SK-N-SH (cell line): ENCODE measurements at regions of chr20 and their contacts with region 1.

Region 1: GRCh38 chr20:53915446-53916172 is 154.8 kb downstream of the BCAS1 start:
- DNase-seq: peak; percentile 86
- H3K4me3 ChIP-seq: peak overlapping the region; percentile 58 to 75
- H3K27ac ChIP-seq: peak overlapping the region; percentile 96 to 99
- H3K4me1 ChIP-seq: peaks cover 37 to 41% of the 10 kb centered on the region in 2 experiments
- H3K27me3 ChIP-seq: no peaks in the 10 kb centered on the region
- CTCF ChIP-seq: peak; percentile 94
- EP300 ChIP-seq: peak; percentile 7 to 36; a peak in 1 of 4 replicates
- RAD21 ChIP-seq: peak; percentile 85

Region 2: DNA sequence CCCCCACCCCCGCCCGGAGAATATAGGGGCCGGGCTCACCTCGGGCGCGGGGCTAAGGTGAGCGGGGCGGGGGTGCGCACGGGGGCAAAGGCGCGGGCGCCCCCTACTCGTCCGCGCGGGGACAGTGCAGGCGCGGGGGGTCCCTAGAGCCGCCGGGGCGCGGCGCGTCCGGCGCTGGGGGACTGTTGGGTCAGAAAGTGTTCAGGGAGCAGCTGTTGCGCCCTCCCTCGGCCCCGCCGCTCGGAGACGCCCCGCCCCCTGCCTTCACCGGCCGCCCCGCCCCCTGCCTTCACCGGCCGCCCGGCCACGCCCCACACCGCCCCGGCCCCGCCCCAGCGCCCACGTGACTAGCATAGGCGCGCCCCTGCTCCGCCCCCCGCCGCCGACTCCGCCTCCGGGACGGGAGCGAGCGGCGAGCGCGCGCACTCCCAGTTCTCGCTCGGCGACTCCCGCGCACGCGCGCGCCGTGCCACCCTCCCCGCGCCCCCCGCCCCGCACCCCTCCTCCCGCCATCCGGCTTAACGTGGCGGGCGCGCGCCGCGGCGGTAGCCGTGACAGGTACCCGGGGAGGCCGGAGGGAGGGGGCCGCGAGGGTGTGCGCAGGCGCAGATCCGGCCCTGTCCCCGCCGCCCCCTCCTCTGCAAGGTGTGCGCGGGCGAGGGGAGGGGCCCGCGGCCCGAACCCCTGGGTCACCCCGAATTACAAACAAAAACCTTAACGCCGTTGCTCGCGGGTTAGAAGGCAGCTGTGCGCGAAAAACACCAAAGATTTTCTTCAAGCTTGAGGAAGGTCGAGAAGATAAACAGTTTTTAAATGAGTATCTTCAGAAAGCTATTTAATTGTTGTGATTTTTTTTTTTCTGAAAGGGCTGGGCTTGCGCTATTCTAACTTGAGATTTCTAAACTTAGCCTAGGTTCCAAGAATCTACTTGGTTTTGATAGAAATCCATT is 321.3 kb before region 1 on chr20:
- CTCF ChIA-PET with region 1: interaction called, 14 read pairs
- POLR2A ChIA-PET with region 1: interaction called, 7 read pairs
- DNase-seq: peak; percentile 92
- H3K4me3 ChIP-seq: peak overlapping the region; percentile 76 to 80
- H3K27ac ChIP-seq: peak overlapping the region; percentile 80 to 86
- H3K4me1 ChIP-seq: peaks cover 4 to 9% of the 10 kb centered on the region in 2 experiments; a peak in 3 of 4 replicates
- H3K27me3 ChIP-seq: no peaks in the 10 kb centered on the region
- CTCF ChIP-seq: peak; percentile 31; the same call in 1 of the 2 replicates
- EP300 ChIP-seq: no peak
- RAD21 ChIP-seq: no peak; the same call in 1 of the 2 replicates

Region 3: DNA sequence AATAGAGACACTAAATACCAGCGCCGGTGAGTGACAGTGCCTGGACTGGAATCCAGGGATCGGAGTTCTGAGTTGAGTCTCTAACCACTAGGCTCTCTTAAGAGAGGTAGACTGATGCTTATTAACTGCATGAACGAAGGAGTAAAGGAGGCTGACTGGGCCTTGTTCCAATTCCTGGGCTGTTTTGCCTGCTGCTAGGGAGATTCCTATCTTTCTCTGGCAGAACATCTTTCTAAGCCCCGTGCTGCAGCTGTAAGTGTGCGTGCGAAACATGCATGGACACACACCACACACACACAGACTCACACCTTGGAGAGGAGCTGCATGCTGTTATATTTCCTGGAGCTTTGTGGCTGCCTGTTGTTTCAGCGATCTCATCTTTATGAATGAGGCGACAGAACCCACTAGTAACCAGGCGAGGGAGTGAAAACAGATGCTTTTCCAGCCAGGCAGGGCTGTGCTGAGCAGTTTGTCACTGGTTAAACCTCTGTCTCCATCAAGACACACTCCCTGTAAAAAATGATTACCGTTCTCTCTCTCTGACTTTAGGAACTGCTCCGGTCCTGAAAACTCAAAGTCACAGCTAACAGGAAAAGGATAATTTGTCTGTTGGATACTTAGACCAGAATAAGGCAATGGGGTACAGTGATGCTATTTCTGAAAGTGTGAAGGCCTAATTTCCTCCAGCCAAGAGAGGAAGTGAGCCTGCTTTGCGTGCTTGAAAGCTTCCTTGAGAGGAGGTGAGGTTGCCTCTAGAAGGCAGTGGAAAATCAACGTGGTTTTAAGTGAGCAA is 164.6 kb before region 1 on chr20:
- CTCF ChIA-PET with region 1: interaction called, 20 read pairs
- POLR2A ChIA-PET with region 1: interaction called, 12 read pairs
- DNase-seq: peak; percentile 70
- H3K4me3 ChIP-seq: no peak overlapping the region
- H3K27ac ChIP-seq: peak overlapping the region; percentile 83 to 95
- H3K4me1 ChIP-seq: peaks cover 12 to 23% of the 10 kb centered on the region in 2 experiments; a peak in 3 of 4 replicates
- H3K27me3 ChIP-seq: no peaks in the 10 kb centered on the region
- CTCF ChIP-seq: peak; percentile 15; the same call in 1 of the 2 replicates
- EP300 ChIP-seq: peak in 1 of 2 experiments; percentile 82; a peak in 2 of 4 replicates
- RAD21 ChIP-seq: peak; percentile 22

Region 4: DNA sequence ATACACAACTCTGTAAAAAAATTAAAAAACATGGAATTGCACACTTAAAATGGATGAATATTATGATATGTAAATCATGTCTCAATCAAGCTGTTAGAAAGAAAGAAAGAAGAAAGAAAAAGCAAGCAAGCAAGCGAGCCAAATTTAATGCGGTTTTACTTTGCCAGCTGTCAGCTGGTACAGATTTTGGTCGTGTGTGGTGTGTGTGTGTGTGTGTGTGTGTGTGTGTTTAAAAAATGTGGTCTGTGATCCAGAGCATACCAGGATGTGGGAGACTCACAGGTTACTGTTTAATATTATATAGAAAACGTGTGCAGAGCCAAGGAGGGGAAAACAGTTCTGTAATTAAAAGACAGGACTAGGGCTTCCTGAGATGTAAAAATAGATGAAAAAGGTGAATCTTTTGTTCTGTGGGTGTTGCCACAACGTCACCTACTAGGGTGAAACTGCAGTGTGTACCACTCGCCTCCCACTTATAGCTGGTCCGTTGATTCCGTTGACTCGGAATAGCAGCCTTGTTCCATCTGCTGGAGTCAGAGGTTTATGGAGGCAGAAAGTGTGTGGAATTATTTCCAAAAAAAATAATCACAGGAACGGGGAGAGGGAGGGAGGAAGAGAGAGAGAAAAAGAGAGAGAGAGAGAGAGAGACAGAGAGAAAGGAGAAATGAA is 42.9 kb before region 1 on chr20:
- CTCF ChIA-PET with region 1: interaction called, 16 read pairs
- POLR2A ChIA-PET with region 1: no interaction called
- DNase-seq: no peak
- H3K4me3 ChIP-seq: no peak overlapping the region
- H3K27ac ChIP-seq: peak overlapping the region; percentile 64 to 77
- H3K4me1 ChIP-seq: peaks cover 9 to 36% of the 10 kb centered on the region in 2 experiments
- H3K27me3 ChIP-seq: no peaks in the 10 kb centered on the region
- CTCF ChIP-seq: no peak
- EP300 ChIP-seq: no peak
- RAD21 ChIP-seq: no peak

Region 5: GRCh38 chr20:53905019-53905847 is 10.4 kb before region 1 on chr20:
- CTCF ChIA-PET with region 1: interaction called, 20 read pairs
- POLR2A ChIA-PET with region 1: interaction called, 3 read pairs
- DNase-seq: no peak
- H3K4me3 ChIP-seq: no peak overlapping the region
- H3K27ac ChIP-seq: no peak overlapping the region
- H3K4me1 ChIP-seq: peaks cover 12 to 17% of the 10 kb centered on the region in 2 experiments
- H3K27me3 ChIP-seq: no peaks in the 10 kb centered on the region
- CTCF ChIP-seq: no peak
- EP300 ChIP-seq: no peak
- RAD21 ChIP-seq: no peak

Region 6: GRCh38 chr20:53974785-53975555 is 59.4 kb after region 1 on chr20:
- CTCF ChIA-PET with region 1: no interaction called
- POLR2A ChIA-PET with region 1: no interaction called
- DNase-seq: no peak
- H3K4me3 ChIP-seq: no peak overlapping the region
- H3K27ac ChIP-seq: no peak overlapping the region
- H3K4me1 ChIP-seq: no peaks in the 10 kb centered on the region
- H3K27me3 ChIP-seq: no peaks in the 10 kb centered on the region
- CTCF ChIP-seq: no peak
- EP300 ChIP-seq: no peak
- RAD21 ChIP-seq: no peak

Region 7: GRCh38 chr20:54062812-54063280 is 147.2 kb after region 1 on chr20:
- CTCF ChIA-PET with region 1: interaction called, 17 read pairs
- POLR2A ChIA-PET with region 1: no interaction called
- DNase-seq: peak; percentile 66
- H3K4me3 ChIP-seq: no peak overlapping the region; a peak in 1 of 4 replicates
- H3K27ac ChIP-seq: no peak overlapping the region
- H3K4me1 ChIP-seq: no peaks in the 10 kb centered on the region; a peak in 2 of 4 replicates
- H3K27me3 ChIP-seq: no peaks in the 10 kb centered on the region
- CTCF ChIP-seq: peak; percentile 67
- EP300 ChIP-seq: no peak
- RAD21 ChIP-seq: peak; percentile 90

Region 8: GRCh38 chr20:54074511-54074910 is 158.9 kb after region 1 on chr20:
- CTCF ChIA-PET with region 1: no interaction called
- POLR2A ChIA-PET with region 1: no interaction called
- DNase-seq: no peak
- H3K4me3 ChIP-seq: no peak overlapping the region
- H3K27ac ChIP-seq: no peak overlapping the region
- H3K4me1 ChIP-seq: no peaks in the 10 kb centered on the region; a peak in 2 of 4 replicates
- H3K27me3 ChIP-seq: no peaks in the 10 kb centered on the region; the same call in 1 of the 2 replicates
- CTCF ChIP-seq: no peak
- EP300 ChIP-seq: no peak
- RAD21 ChIP-seq: no peak

Region 9: GRCh38 chr20:54115151-54115854 is 199.7 kb after region 1 on chr20:
- CTCF ChIA-PET with region 1: no interaction called
- POLR2A ChIA-PET with region 1: no interaction called
- DNase-seq: no peak
- H3K4me3 ChIP-seq: no peak overlapping the region
- H3K27ac ChIP-seq: no peak overlapping the region
- H3K4me1 ChIP-seq: no peaks in the 10 kb centered on the region
- H3K27me3 ChIP-seq: no peaks in the 10 kb centered on the region
- CTCF ChIP-seq: no peak
- EP300 ChIP-seq: no peak
- RAD21 ChIP-seq: no peak